ENCODE measurements at regions of chr2 and their contacts with region 1.

Region 1: GRCh38 chr2:85538486-85539360 is at the start of gene MAT2A:
- DNase-seq: peak; percentile 94
- H3K4me3 ChIP-seq: peak within 1 kb of the TSS; percentile 87 to 94
- H3K27ac ChIP-seq: peak within 1 kb of the TSS; percentile 99
- H3K4me1 ChIP-seq: peaks cover 26% of the 10 kb centered on the region
- H3K27me3 ChIP-seq: no peaks in the 10 kb centered on the region
- CTCF ChIP-seq: peak; percentile 74 to 82 (median 81)
- POLR2A ChIP-seq: peak; percentile 96
- total RNA-seq, gene MAT2A: 219 to 268 TPM

Region 2: GRCh38 chr2:84713441-84713840 is 825.3 kb before region 1 on chr2:
- intact Hi-C with region 1: no loop called
- DNase-seq: no peak
- H3K4me3 ChIP-seq: no peak overlapping the region
- H3K27ac ChIP-seq: no peak overlapping the region
- H3K4me1 ChIP-seq: no peaks in the 10 kb centered on the region
- H3K27me3 ChIP-seq: no peaks in the 10 kb centered on the region
- CTCF ChIP-seq: no peak
- POLR2A ChIP-seq: no peak

Region 3: GRCh38 chr2:85053802-85054201 is 484.9 kb before region 1 on chr2:
- intact Hi-C with region 1: no loop called
- DNase-seq: no peak
- H3K4me3 ChIP-seq: no peak overlapping the region
- H3K27ac ChIP-seq: no peak overlapping the region
- H3K4me1 ChIP-seq: no peaks in the 10 kb centered on the region
- H3K27me3 ChIP-seq: no peaks in the 10 kb centered on the region
- CTCF ChIP-seq: no peak
- POLR2A ChIP-seq: no peak

Region 4: GRCh38 chr2:85437488-85438284 is 101.0 kb before region 1 on chr2:
- intact Hi-C with region 1: loop called (anchors 5 kb)
- DNase-seq: peak; percentile 88
- H3K4me3 ChIP-seq: peak overlapping the region; percentile 34 to 57
- H3K27ac ChIP-seq: peak overlapping the region; percentile 95 to 96
- H3K4me1 ChIP-seq: peaks cover 40% of the 10 kb centered on the region
- H3K27me3 ChIP-seq: no peaks in the 10 kb centered on the region
- CTCF ChIP-seq: peak in 1 of 3 experiments; percentile 5
- POLR2A ChIP-seq: peak; percentile 83

Region 5: DNA sequence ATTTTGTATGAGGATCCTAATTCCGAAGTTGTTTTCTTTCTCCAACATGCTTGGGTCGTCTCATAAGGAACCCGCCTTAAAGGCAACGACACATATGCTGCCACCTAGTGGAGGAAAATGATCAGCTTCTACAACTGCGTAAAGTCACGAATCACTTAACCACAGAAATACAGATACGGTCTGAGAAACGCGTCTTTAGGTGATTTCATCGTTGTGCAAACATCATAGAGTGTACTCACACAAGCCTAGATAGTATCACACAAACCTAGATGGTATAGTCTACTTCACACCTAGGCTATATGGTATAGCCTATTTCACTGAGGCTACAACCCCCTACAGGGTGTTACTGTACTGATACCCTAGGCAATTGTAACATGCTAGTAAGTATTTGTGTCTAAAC is 168.6 kb after region 1 on chr2:
- intact Hi-C with region 1: no loop called
- DNase-seq: peak; percentile 86
- H3K4me3 ChIP-seq: no peak overlapping the region
- H3K27ac ChIP-seq: peak overlapping the region in 1 of 2 donors; percentile 14
- H3K4me1 ChIP-seq: peaks cover 36% of the 10 kb centered on the region
- H3K27me3 ChIP-seq: no peaks in the 10 kb centered on the region
- CTCF ChIP-seq: peak; percentile 78 to 91 (median 90)
- POLR2A ChIP-seq: no peak

Measured in testis (tissue), 5 donors.